ENCODE measurements at regions of chr9 and their contacts with region 1.

Region 1: GRCh38 chr9:129597355-129598088 is 23.4 kb downstream of the C9orf50 start:
- DNase-seq: peak; percentile 61 to 78
- ATAC-seq: peak; percentile 73 to 75
- H3K4me3 ChIP-seq: peak overlapping the region; percentile 40
- H3K27ac ChIP-seq: peak overlapping the region; percentile 99 to 100
- H3K4me1 ChIP-seq: peaks cover 57% of the 10 kb centered on the region
- CTCF ChIP-seq: no peak
- EP300 ChIP-seq: peak; percentile 75 to 88; a peak in 3 of 5 replicates
- POLR2A ChIP-seq: peak; percentile 28
- RAD21 ChIP-seq: peak in 1 of 2 experiments; percentile 30; a peak in 1 of 5 replicates

Region 2: GRCh38 chr9:129584136-129584535 is 13.4 kb before region 1 on chr9:
- CTCF ChIA-PET with region 1: interaction called, 10 read pairs
- POLR2A ChIA-PET with region 1: interaction called, 10 read pairs
- DNase-seq: peak; percentile 82 to 86
- ATAC-seq: peak; percentile 46 to 90; a peak in 4 of 6 replicates
- H3K4me3 ChIP-seq: no peak overlapping the region
- H3K27ac ChIP-seq: peak overlapping the region; percentile 45 to 59
- H3K4me1 ChIP-seq: no peaks in the 10 kb centered on the region
- CTCF ChIP-seq: no peak
- EP300 ChIP-seq: no peak
- POLR2A ChIP-seq: no peak
- RAD21 ChIP-seq: no peak

Region 3: DNA sequence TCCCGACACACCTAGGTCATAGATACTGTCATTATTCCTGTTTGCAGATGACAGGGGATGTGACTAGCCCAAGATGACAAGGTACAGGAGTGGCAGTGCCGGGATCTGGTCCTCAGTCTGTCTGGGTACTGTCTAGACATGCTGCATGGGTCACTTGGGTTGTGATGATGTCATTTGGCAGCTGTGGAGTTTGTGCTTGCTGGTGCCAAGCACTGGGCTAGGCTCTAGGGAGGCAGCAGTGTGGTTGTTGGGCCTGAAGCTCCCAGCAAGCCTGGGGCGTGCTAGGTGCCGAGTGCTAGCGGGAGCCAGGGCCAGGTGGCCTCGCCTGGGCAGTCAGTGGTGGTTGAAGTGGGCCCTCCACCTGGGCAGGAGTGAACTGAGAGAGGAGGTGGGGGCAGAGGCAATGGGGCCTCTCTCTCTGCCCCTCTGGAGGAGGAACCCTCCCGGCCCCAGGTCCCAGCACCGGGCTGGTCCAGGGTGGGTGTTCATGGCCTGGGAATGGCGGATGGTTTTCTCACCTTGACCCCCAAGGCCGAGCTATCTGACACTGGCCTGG is 53.2 kb after region 1 on chr9:
- CTCF ChIA-PET with region 1: no interaction called
- POLR2A ChIA-PET with region 1: no interaction called
- DNase-seq: peak in 1 of 2 experiments; percentile 42
- ATAC-seq: peak; percentile 9 to 12; a peak in 1 of 6 replicates
- H3K4me3 ChIP-seq: no peak overlapping the region
- H3K27ac ChIP-seq: peak overlapping the region; percentile 11 to 38; a peak in 1 of 6 replicates
- H3K4me1 ChIP-seq: peaks cover 7% of the 10 kb centered on the region; the same call in 1 of the 3 replicates
- CTCF ChIP-seq: no peak
- EP300 ChIP-seq: no peak
- POLR2A ChIP-seq: no peak
- RAD21 ChIP-seq: no peak

Region 4: DNA sequence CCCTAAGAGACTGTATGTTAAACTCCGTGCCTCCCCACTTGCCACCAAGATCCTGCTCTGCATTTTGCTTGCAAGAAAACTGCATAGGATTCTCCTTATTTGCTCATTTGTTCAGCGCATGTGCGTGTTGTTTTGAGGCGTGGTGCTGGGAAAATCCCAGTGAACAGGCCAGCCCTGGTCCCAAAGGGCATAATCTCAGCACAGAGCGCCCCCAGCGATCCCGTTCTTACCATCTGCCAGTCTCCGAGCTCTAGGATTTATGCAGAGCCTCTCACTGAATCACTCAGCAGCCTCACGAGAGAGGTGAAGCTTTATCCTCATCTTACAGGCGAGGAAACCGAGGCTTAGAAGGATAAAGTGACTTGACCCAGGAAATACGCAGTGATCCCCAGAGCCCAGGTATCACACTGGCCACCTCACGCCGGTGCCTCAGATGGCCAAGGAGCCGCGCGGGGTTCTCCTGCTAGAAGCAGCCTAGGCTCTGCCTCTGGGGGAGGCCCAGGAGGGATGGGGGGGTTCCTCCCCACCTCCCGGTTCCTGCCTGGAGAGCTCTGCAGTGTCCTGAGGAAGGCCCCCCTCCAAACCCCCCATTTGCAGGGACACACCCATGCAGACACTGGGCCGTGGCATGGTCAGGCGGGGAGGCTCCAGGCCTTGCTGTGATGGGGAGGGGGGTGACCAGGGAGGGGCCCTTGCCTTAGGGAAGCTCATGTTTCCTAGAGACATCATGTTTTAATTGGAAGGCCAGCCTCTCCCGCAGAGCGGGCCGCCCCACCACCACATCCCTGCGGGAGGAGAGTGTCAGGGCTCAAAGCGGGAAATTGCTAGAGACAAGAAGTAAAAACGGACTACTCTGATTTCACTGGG is 79.7 kb after region 1 on chr9:
- CTCF ChIA-PET with region 1: no interaction called
- POLR2A ChIA-PET with region 1: no interaction called
- DNase-seq: no peak
- ATAC-seq: peak in 1 of 2 experiments; percentile 43; a peak in 2 of 6 replicates
- H3K4me3 ChIP-seq: no peak overlapping the region
- H3K27ac ChIP-seq: no peak overlapping the region
- H3K4me1 ChIP-seq: no peaks in the 10 kb centered on the region
- CTCF ChIP-seq: no peak
- EP300 ChIP-seq: no peak
- POLR2A ChIP-seq: no peak
- RAD21 ChIP-seq: no peak

Measured in A549 (cell line).